ENCODE measurements at regions of chr11 and their contacts with region 1.

Region 1: DNA sequence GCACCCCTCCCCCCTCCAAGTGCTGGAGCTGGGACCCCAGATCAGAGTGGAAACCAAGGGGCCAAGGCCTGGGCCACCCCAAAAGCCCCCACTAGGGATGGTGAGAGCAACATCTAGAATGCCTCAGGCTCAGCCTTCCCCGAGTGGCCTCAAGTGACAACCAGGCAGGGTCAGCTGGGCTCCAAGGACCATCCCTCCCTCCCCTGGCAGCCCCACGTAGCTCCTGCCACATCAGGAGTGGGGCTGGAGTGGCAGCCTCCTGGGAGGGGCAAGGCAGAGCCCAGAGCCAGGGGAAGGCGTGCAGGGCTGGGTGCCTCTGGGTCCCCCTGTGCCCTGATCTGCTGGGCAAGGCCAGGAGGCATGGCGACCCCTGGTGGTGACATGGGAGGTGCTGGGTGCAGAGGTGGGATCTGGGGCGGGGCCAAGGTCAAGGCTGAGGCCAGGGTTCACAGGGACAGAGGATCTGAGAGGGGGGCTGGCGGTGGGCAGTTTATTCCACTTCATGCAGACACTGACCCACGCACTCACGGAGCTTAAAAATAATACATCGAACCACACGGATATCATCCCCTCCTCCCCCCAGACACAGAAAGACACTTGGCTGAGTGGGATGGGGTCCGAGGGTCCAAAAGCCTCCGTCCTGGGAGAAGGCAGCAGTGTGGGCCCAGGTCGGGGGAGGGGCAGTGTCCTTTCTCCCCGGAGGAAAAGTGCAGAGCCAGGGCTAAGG is 15.8 kb upstream of the EHD1 start:
- DNase-seq: peak; percentile 79
- H3K4me3 Mint-ChIP-seq: no peak overlapping the region
- H3K27ac Mint-ChIP-seq: no peak overlapping the region
- H3K4me1 Mint-ChIP-seq: no peaks in the 10 kb centered on the region
- H3K27me3 Mint-ChIP-seq: no peaks in the 10 kb centered on the region
- CTCF ChIP-seq: peak; percentile 91

Region 2: GRCh38 chr11:64787526-64788320 is 106.5 kb before region 1 on chr11:
- CTCF ChIA-PET with region 1: interaction called, 6 read pairs
- POLR2A ChIA-PET with region 1: no interaction called
- intact Hi-C with region 1: loop called (anchors 2 kb)
- DNase-seq: peak; percentile 66
- H3K4me3 Mint-ChIP-seq: no peak overlapping the region
- H3K27ac Mint-ChIP-seq: no peak overlapping the region
- H3K4me1 Mint-ChIP-seq: no peaks in the 10 kb centered on the region
- H3K27me3 Mint-ChIP-seq: no peaks in the 10 kb centered on the region
- CTCF ChIP-seq: peak; percentile 81

Region 3: GRCh38 chr11:64826578-64827450 is 67.4 kb before region 1 on chr11:
- CTCF ChIA-PET with region 1: no interaction called
- POLR2A ChIA-PET with region 1: no interaction called
- intact Hi-C with region 1: no loop called
- DNase-seq: no peak
- H3K4me3 Mint-ChIP-seq: no peak overlapping the region
- H3K27ac Mint-ChIP-seq: no peak overlapping the region
- H3K4me1 Mint-ChIP-seq: no peaks in the 10 kb centered on the region
- H3K27me3 Mint-ChIP-seq: no peaks in the 10 kb centered on the region
- CTCF ChIP-seq: no peak

Region 4: GRCh38 chr11:64854534-64855429 is 39.5 kb before region 1 on chr11:
- CTCF ChIA-PET with region 1: interaction called, 286 read pairs
- POLR2A ChIA-PET with region 1: no interaction called
- intact Hi-C with region 1: no loop called
- DNase-seq: peak; percentile 97
- H3K4me3 Mint-ChIP-seq: peak overlapping the region; percentile 54
- H3K27ac Mint-ChIP-seq: peak overlapping the region; percentile 86
- H3K4me1 Mint-ChIP-seq: peaks cover 28% of the 10 kb centered on the region
- H3K27me3 Mint-ChIP-seq: no peaks in the 10 kb centered on the region
- CTCF ChIP-seq: no peak

Region 5: DNA sequence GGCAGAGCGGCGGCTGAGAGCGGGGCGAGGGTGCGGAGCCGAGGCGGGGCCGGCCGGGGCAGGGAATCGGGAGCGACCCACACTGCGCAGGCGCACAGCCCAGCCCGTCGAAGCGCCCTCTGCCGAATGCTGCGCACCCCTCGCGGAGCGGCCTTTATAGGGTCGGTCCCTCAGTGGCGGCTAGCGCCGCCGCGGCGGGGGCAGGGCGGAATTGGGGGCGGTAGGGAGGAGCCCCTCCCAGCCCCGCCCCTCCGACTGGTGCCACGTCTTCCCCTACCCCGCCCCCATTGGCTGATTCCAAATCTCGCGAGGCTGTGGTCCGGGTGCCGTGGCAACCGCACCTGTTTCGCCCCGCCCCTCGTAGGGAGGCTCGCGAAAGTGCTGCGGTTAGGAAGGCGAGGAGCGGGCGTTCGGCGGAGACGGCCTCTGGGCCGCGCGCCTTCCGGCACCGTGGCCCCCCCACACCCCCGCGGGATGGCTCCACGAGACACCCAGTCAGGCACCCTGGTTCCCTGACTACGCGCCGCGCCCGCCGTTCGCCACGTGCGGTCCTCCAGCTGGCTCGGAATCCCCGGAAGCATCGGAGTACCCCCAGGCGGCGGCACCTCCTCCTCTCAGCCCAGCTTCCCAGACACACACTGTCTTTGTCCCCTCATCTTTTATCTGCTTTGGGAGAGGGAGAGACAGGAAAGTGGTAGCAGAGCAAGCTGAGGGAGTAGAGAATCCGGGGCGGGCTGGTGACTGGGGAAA is 15.6 kb before region 1 on chr11 and contains the start of gene EHD1:
- CTCF ChIA-PET with region 1: interaction called, 10 read pairs
- POLR2A ChIA-PET with region 1: interaction called, 3 read pairs
- intact Hi-C with region 1: no loop called
- DNase-seq: peak; percentile 98
- H3K4me3 Mint-ChIP-seq: peak within 1 kb of the TSS; percentile 95
- H3K27ac Mint-ChIP-seq: peak within 1 kb of the TSS; percentile 95
- H3K4me1 Mint-ChIP-seq: peaks cover 22% of the 10 kb centered on the region
- H3K27me3 Mint-ChIP-seq: no peaks in the 10 kb centered on the region
- CTCF ChIP-seq: peak; percentile 27
- total RNA-seq, gene EHD1: 67.9 and 80.6 TPM in 2 replicates

Region 6: DNA sequence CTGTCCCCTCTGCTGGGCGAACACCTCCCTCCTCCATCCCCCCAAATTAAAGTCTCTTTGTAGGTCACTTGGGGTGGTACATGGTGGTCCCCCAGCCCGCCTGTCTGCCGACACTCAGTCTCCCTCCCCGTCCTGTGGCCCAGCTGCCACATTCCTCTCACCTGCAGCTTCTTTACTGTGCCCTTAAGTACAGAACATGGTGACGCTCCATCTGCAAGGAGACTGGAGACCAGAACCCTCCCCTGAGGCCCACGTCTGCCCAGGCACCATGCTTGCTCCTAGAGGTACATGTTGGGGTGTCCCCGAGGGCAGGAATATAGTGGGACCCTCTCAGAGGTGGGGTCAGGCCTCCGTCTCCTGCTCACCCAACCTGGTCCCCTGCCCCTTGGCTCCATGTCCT is 10.2 kb before region 1 on chr11:
- CTCF ChIA-PET with region 1: interaction called, 10 read pairs
- POLR2A ChIA-PET with region 1: no interaction called
- intact Hi-C with region 1: no loop called
- DNase-seq: no peak
- H3K4me3 Mint-ChIP-seq: no peak overlapping the region
- H3K27ac Mint-ChIP-seq: no peak overlapping the region
- H3K4me1 Mint-ChIP-seq: peaks cover 10% of the 10 kb centered on the region
- H3K27me3 Mint-ChIP-seq: no peaks in the 10 kb centered on the region
- CTCF ChIP-seq: no peak